Astrocyte of the cerebellum (primary cell): ENCODE measurements at regions of chr3 and their contacts with region 1.

Region 1: GRCh38 chr3:197038679-197039462 is 9.3 kb upstream of the MELTF start:
- DNase-seq: no peak
- H3K4me3 ChIP-seq: no peak overlapping the region
- CTCF ChIP-seq: no peak

Region 2: GRCh38 chr3:196942226-196942914 is 96.5 kb before region 1 on chr3 and contains the start of gene NCBP2:
- in situ Hi-C with region 1: no loop called
- DNase-seq: peak; percentile 94
- H3K4me3 ChIP-seq: peak within 1 kb of the TSS; percentile 98
- CTCF ChIP-seq: peak; percentile 62

Region 3: DNA sequence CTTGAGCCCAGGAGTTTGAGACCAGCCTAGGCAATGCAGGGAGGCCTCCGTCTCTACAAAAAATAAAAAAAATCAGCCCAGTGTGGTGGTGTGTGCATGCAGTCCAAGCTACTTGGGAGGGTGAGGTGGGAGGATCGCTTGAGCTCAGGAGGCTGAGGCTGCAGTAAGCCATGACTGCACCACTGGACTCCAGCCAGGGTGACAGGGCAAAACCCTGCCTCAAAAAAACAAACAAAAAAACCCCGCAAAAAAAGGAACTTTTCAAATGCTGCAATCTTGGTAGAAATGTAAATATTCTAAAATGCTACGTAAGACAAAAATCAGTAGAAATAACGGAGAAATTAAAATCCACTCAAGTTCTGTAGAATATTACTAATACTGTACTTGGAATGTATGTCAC is 98.9 kb after region 1 on chr3:
- in situ Hi-C with region 1: loop called (anchors 5 kb)
- DNase-seq: no peak
- H3K4me3 ChIP-seq: no peak overlapping the region
- CTCF ChIP-seq: no peak